Activated T-helper 1 cell treated with anti-CD3 and anti-CD28 coated beads, Interleukin-12 subunit alpha, Interleukin-12 subunit beta, Interleukin-2, Interleukin-4 antibody, amounts not matched to agents 30 ng/mL and 10 ng/mL and 1 ng/mL, durations not matched to agents 14 hours and 24 hours and 36 hours (primary cell): ENCODE measurements at regions of chr4 and their contacts with region 1.

Region 1: DNA sequence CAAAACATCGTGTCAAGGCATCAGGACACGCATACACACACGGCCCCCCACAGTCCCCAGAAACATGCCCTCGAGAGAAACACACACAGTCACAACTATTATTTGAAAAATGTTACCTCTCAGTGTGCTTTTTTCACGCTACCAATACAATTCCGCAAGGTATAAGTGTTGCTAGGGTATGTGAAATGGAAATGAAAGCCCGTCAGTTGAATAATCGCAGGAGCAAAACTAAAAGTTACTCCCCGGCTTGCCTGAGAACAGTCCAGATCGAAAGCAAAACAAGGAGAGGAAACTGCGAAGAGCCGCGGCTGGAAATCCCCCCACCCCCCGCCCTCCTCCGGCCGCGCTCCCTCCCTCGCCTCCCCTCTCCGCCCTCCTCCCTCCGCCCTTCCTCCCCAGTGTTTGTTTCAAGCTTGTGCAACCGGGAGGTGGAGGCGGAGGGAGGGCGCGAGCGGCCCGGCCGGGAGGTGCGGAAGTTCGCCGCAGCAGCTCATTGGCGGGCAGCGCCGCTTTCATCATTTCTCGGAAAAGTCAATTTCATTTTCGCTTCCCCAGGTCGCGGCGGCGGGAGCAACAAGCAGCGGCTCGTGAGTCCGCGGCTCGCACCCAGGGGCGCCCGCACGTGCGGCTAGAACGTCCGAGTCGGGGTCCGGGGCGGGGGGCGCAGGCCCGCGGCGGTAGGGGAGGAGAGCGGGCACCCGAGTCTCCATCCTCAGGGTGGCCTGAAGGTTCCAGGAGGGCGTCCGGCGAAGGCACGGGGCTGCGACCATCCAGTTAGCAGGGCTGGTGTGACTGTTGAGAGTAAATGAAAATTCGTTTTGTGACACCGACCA is at the start of gene IRF2:
- DNase-seq: peak; percentile 94
- H3K4me3 Mint-ChIP-seq: peak within 1 kb of the TSS; percentile 97
- H3K27ac Mint-ChIP-seq: peak within 1 kb of the TSS; percentile 96
- H3K4me1 Mint-ChIP-seq: peaks cover 64% of the 10 kb centered on the region
- H3K27me3 Mint-ChIP-seq: no peaks in the 10 kb centered on the region
- total RNA-seq, gene IRF2: 64.2 and 75.8 TPM in 2 replicates

Region 2: DNA sequence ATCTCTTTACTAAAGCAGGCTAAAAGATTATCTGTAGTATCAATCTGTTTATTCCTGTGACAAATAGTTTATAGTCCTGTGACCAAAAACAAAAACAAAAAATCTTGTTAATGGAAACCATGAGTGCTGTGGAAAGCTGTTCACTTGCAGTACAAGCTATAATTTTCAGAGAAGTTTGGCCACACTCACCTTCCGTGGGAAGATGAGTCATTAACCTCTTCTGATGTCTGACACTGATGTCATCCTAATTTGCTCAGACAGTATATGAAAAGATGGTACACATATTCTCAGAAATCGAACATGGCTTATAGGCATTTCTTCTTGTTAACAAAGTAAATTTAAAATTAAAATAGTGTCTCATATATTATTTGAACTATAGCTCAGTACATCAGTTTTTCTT is 236.9 kb before region 1 on chr4:
- intact Hi-C with region 1: loop called (anchors 1 kb)
- DNase-seq: peak; percentile 62
- H3K4me3 Mint-ChIP-seq: peak overlapping the region; percentile 70
- H3K27ac Mint-ChIP-seq: peak overlapping the region; percentile 97
- H3K4me1 Mint-ChIP-seq: peaks cover 59% of the 10 kb centered on the region
- H3K27me3 Mint-ChIP-seq: no peaks in the 10 kb centered on the region

Region 3: GRCh38 chr4:184310171-184310567 is 164.3 kb before region 1 on chr4:
- intact Hi-C with region 1: loop called (anchors 1 kb)
- DNase-seq: no peak
- H3K4me3 Mint-ChIP-seq: peak overlapping the region; percentile 34
- H3K27ac Mint-ChIP-seq: peak overlapping the region; percentile 74
- H3K4me1 Mint-ChIP-seq: peaks cover 65% of the 10 kb centered on the region
- H3K27me3 Mint-ChIP-seq: no peaks in the 10 kb centered on the region

Region 4: DNA sequence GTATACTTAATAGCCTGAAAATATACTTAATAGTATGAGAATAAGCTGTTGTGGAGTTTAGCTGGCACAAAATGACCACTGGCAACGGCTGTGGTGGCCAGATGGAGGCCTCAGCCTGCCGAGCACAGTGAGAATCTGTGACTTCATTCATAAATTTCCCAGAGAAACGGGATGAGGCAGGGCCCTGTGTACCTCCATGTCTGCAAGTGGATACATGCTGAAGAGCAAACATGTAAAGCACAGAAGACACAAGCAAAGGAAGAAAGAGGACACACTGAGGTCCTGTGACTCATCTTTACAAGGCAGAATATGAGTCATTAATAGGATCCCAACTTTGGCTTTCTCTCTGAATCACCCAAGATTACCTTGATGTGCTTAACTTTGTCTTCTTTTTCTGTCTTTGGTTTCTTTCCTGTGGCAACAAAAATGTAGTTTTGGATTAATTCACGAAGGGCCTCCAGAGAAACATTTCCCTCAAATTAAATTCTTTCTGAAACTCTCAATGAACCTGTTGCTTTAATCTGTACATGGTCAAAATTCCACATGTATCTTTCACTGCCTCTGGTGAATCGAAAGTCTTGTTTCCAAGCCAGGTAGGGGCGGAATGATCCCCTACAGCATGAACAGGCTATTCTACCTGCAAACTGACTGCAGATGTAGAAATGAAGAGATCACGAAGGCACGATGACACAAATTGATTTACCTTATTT is 56.5 kb before region 1 on chr4:
- intact Hi-C with region 1: loop called (anchors 1 kb)
- DNase-seq: peak; percentile 21
- H3K4me3 Mint-ChIP-seq: peak overlapping the region; percentile 78
- H3K27ac Mint-ChIP-seq: peak overlapping the region; percentile 95
- H3K4me1 Mint-ChIP-seq: peaks cover 90% of the 10 kb centered on the region
- H3K27me3 Mint-ChIP-seq: no peaks in the 10 kb centered on the region

Region 5: DNA sequence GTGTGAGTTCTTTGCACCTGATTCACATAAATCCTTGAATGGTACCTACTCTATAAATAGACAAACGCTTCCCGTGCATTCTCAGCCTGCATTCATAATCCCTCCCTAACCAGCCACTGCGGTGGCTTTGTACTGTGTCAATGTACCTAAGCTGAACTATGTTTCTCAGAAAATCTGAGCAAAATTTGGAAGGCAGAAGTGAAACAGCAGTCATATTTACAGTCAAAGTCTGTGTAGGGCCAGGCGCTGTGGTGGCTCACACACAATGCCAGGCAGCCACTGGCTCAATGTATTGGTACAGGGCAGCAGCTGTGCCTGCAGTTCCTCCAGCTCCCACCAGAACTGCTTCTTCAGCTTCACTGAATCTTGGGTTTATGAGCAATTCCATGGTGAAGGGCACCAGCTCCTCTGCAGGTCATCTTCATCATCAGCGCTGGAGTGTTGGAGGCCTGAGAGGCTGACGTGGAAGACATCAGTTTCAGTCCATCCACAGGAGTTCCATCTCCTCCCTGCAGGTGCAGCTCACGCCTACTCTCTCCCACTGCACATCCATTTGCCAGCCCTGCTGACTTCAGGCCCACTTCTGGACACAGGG is 32.1 kb after region 1 on chr4:
- intact Hi-C with region 1: loop called (anchors 1 kb)
- DNase-seq: peak; percentile 48
- H3K4me3 Mint-ChIP-seq: peak overlapping the region; percentile 30
- H3K27ac Mint-ChIP-seq: peak overlapping the region; percentile 60
- H3K4me1 Mint-ChIP-seq: peaks cover 43% of the 10 kb centered on the region
- H3K27me3 Mint-ChIP-seq: no peaks in the 10 kb centered on the region

Region 6: DNA sequence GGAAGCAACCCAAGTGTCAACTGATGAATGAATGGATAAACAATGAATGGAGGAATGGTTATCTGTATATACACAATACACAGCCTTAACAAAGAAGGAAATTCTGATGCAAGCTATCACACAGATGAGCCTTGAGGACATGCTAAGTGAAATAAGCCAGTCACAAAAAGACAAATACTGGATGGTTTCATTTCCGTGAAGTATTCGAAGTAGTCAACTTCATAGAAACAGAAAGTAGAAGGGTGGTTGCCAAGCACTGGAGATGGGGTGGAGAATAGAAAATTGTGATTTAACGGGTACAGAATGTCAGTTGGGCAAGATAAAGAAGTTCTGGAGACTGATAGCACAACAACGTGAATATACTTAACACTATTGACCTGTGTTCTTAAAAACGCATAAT is 231.2 kb after region 1 on chr4:
- intact Hi-C with region 1: no loop called
- DNase-seq: no peak
- H3K4me3 Mint-ChIP-seq: peak overlapping the region; percentile 8
- H3K27ac Mint-ChIP-seq: peak overlapping the region; percentile 32
- H3K4me1 Mint-ChIP-seq: peaks cover 27% of the 10 kb centered on the region
- H3K27me3 Mint-ChIP-seq: no peaks in the 10 kb centered on the region

Region 7: DNA sequence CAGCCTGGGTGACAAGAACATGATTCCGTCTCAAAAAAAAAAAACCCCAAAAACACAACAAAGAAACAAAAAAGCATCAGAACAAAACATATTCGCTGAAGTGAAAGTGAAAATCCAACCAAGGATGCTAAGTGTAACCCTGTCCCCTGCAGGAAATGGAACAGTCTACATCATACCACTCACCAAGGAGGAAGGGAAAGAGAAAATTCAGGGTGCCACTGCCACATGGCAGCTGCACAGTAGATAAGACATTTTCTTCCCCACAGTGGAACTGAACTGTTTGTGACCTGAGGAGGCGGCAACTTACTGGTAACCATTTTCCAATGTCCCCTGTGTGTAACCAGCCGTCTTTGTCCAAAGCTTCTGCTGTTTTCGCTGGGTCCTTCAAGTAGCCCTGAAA is 287.6 kb after region 1 on chr4:
- intact Hi-C with region 1: loop called (anchors 1 kb)
- DNase-seq: peak; percentile 59
- H3K4me3 Mint-ChIP-seq: peak overlapping the region; percentile 16
- H3K27ac Mint-ChIP-seq: peak overlapping the region; percentile 85
- H3K4me1 Mint-ChIP-seq: peaks cover 33% of the 10 kb centered on the region
- H3K27me3 Mint-ChIP-seq: no peaks in the 10 kb centered on the region